ENCODE measurements at regions of chr13 and their contacts with region 1.

Region 1: GRCh38 chr13:77751513-77752456 is 54.3 kb downstream of the SLAIN1 start:
- DNase-seq: no peak
- ATAC-seq: peak; percentile 84

Region 2: GRCh38 chr13:77492982-77493381 is 258.8 kb before region 1 on chr13:
- intact Hi-C with region 1: loop called (anchors 5 kb)
- DNase-seq: no peak
- ATAC-seq: no peak

Region 3: DNA sequence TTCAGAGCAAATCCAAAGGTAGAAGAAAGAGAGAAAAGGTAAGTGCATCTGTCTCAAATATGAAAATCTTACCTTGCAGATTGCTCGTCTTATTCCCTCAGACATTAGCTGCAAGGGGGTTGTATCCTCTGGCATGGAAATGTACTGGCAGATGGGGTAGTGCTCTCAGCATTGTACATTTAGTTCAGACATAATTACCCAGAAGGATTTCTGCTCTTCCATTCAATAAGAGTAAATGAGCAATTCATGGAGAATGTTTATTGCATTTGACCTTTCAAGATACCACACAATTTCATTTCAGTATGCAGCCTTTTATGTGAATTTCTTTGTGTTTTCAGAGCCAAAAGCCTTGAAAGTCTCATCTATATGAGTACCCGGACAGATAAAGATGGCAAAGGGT is 152.4 kb before region 1 on chr13:
- intact Hi-C with region 1: loop called (anchors 5 kb)
- DNase-seq: no peak
- ATAC-seq: no peak

Measured in Right ventricle myocardium superior (tissue), 1 donor.